Activated B cell treated with CpG ODN at 0.5 μM for 24 hours (primary cell): ENCODE measurements at regions of chr11 and their contacts with region 1.

Region 1: DNA sequence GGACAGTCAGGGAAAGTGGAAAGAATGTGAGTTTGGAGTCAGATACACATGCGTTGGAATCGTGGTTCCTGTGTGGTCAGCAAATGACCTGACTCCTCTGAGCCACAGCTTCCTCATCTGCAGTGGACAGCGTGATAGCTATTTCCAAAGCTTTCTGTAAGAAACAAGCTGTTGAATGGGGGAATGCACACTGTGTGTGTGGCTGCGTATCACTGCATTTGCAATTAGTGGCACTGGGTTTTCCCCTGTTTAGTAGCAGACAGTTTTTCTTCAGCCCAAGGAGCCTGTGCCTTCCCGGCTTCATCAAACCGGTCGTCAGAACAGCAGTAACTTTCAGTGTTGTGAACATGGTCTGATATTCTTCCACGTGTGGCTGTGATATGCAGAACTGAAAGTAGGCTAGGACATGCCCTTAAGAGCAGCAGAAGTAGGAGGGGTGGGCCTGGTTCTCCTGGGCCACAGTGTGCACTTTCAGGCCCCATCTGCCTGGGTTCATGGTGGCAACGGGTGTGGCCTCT is 121.5 kb downstream of the RRAS2 start:
- DNase-seq: peak; percentile 42
- ATAC-seq: peak; percentile 97
- H3K4me3 Mint-ChIP-seq: peak overlapping the region; percentile 42
- H3K27ac Mint-ChIP-seq: peak overlapping the region; percentile 89
- H3K4me1 Mint-ChIP-seq: peaks cover 39% of the 10 kb centered on the region
- H3K27me3 Mint-ChIP-seq: peaks cover 1% of the 10 kb centered on the region
- CTCF ChIP-seq: no peak

Region 2: DNA sequence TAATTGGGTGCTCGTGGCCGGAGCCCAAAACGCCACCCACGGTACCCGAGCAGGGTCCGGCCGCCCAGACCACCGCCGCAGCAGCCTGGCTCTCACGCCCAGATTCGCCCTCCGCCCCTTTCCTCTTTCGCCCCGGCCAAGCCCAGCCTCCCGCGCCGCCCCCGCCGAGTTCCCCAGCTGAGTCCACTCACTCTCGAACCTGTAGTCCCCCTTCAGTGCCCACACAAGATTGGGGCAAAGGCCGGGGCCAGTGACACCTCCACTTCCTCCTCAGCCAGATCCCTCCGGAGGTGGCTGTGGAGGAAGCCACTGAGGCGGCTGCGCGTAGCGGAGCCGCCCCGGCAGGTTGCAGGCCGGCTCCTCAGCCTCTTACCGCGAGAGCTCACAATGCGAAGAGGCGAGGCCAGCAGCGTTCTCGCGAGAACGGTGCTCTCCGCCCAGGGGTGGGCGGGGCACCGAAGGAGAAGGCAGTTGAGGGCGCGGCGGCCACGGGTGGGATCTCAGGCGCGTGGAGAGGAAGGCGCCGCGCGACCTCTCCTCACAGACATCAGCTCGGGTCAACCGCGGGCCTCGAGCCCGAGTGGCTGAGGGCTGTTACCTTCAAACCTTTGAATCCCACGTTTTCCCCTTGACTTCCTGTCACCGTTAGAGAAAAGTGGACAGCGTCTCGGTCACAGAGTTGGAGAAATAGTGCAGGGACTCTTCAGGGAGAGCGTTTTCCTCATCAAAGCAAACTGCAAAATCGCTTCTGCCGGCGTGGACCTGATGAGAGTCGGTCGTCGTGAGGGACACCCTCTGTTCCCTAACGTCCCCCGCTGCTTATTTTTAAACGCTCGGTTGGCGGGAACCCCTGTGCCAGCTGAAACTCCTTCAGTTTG is 774.4 kb before region 1 on chr11 and contains the start of gene BTBD10:
- CTCF ChIA-PET with region 1: no interaction called
- POLR2A ChIA-PET with region 1: interaction called, 3 read pairs
- intact Hi-C with region 1: loop called (anchors 1 kb)
- DNase-seq: peak; percentile 91
- ATAC-seq: peak; percentile 98
- H3K4me3 Mint-ChIP-seq: peak within 1 kb of the TSS; percentile 98
- H3K27ac Mint-ChIP-seq: peak within 1 kb of the TSS; percentile 95
- H3K4me1 Mint-ChIP-seq: peaks cover 43% of the 10 kb centered on the region
- H3K27me3 Mint-ChIP-seq: no peaks in the 10 kb centered on the region
- CTCF ChIP-seq: no peak
- total RNA-seq, gene BTBD10: 18.8 and 25.1 TPM in 2 replicates

Region 3: DNA sequence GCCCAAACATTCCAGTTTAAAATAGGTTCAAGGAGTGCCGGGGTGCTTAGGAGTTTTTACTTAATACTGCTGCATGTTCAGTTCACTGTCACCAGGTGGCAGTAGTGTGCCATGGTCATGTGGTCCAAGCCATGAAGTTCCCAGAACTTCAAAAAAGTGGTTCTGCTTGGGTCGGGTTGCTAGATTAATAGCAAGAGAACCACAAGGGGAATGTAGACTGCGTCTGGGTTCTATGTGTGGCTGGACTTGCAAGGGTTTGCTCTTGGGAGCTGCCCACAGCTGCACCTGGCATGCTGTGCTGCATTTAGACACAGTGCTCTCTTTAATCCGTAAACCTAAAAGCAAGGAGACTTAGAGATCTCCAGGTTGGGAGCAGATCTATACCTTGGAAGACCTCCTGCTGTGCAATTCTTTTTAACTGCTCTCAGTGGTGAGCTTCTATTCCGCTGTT is 281.5 kb before region 1 on chr11:
- CTCF ChIA-PET with region 1: interaction called, 13 read pairs
- POLR2A ChIA-PET with region 1: no interaction called
- intact Hi-C with region 1: no loop called
- DNase-seq: no peak
- ATAC-seq: peak; percentile 65
- H3K4me3 Mint-ChIP-seq: no peak overlapping the region
- H3K27ac Mint-ChIP-seq: no peak overlapping the region
- H3K4me1 Mint-ChIP-seq: no peaks in the 10 kb centered on the region
- H3K27me3 Mint-ChIP-seq: peaks cover 25% of the 10 kb centered on the region
- CTCF ChIP-seq: peak; percentile 16

Region 4: DNA sequence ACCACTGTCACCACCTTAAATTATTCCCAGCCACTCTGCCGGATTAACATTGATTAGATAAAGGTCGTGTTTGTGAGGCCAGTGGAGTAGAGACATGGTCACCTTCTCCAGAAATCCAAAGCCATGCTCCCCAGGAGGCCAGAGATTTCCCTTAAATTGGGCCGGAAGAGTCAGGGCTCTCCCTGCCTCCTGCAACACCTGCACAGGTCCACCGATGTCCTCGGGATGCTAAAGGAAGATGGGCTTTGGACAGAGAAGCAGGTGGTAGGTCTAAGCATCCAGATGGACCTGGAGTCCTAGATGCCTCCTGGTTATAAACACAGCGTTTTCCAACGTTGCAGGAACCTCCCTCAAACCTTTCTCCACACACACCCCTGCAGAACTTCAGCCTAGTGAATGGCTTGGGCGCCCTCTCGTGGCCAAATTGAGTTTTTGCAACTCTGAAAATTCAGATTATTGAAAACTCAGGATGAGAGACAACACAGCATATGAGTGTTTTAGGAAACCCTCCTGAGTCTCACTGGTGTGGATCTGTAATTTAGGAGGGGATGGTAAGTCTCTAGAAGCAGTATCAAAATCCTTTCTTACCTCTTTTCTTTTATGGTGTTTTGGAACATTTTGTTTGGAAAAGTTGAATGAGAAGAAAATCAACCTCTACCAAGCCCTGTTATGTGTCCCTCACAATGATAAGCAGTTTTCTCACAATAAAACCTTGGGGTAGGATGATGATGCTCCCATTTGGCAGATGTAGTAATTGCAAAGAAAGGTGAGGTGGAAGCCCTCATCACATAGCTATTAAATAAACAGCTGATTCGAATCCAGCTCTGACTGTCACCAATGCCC is 11.8 kb after region 1 on chr11:
- CTCF ChIA-PET with region 1: interaction called, 6 read pairs
- POLR2A ChIA-PET with region 1: no interaction called
- intact Hi-C with region 1: loop called (anchors 1 kb)
- DNase-seq: peak; percentile 54
- ATAC-seq: peak; percentile 49
- H3K4me3 Mint-ChIP-seq: peak overlapping the region; percentile 41
- H3K27ac Mint-ChIP-seq: no peak overlapping the region
- H3K4me1 Mint-ChIP-seq: peaks cover 17% of the 10 kb centered on the region
- H3K27me3 Mint-ChIP-seq: peaks cover 27% of the 10 kb centered on the region
- CTCF ChIP-seq: peak; percentile 71

Region 5: DNA sequence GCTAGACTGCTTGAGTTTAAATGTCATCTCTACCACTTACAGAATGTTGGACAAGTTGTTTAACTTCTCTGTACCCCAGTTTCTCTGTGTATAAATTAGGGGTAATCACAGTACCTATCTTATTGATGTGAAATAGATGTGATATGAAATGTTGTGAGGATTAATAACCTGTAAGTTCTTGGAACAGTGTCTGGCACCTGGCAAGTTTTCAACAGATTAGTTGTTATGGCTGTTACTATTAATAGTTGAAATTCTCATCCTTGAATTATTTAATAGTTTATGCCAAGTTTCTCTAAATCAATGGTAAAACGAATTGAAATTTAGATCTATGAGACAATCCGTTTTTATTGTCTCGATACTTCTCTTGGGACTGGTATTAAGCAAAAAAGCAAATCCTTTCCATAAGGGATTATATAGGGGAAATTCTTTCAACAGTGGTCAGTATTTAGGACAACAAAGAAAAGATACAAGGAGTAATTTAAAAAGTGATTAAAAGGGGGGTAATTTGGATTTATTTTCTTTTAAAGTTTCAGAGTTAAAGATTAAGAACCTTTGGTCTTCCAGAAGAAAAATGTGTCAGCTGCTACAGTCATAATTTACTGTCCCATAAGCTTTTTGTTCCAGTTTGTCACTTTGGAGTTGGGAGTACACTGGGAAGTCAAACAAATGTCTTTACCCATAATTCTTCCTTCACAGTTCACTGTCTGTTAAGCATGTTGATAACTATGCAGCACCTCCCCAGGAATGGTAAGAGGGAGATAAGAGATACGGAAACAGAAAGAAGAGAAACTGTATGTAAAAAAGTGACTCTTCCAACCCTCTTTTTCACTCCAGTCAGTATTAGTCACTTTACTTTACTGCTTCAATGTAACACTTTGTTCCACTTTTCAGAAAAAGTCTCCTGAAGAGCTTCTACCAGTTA is 419.3 kb after region 1 on chr11:
- CTCF ChIA-PET with region 1: no interaction called
- POLR2A ChIA-PET with region 1: no interaction called
- intact Hi-C with region 1: no loop called
- DNase-seq: no peak
- ATAC-seq: no peak
- H3K4me3 Mint-ChIP-seq: no peak overlapping the region
- H3K27ac Mint-ChIP-seq: no peak overlapping the region
- H3K4me1 Mint-ChIP-seq: no peaks in the 10 kb centered on the region
- H3K27me3 Mint-ChIP-seq: peaks cover 22% of the 10 kb centered on the region
- CTCF ChIP-seq: no peak